Activated B cell treated with CpG ODN at 0.5 μM for 24 hours (primary cell): ENCODE measurements at regions of chr16 and their contacts with region 1.

Region 1: DNA sequence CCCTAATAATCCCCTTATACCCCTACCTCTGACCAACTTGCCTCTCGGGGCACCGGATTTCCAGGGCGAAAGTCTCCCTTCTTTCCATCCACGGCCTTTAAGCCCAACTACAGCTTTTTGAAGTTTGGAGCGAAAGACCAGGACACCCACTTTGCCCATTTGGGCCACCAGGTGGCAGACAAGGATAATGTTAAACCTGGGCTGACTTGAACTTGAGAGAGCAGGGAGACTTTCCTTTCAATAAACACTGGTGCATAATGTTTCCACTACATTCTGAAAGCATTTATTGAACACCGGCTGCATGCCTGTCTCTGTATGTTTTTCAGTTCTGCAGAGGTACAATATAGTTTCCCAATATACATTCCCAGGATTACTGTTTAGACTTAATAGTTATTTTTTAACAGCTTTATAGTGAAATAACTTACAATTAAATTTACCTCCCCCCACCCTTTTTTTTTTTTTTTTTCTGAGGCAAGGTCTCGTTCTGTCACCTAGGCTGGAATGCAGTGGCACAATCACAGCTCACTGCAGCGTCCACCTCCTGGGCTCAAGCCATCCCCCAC is 6.9 kb upstream of the CES3 start:
- DNase-seq: peak; percentile 51
- ATAC-seq: peak; percentile 78
- H3K4me3 Mint-ChIP-seq: no peak overlapping the region
- H3K27ac Mint-ChIP-seq: no peak overlapping the region
- H3K4me1 Mint-ChIP-seq: no peaks in the 10 kb centered on the region
- H3K27me3 Mint-ChIP-seq: peaks cover 23% of the 10 kb centered on the region
- CTCF ChIP-seq: no peak

Region 2: DNA sequence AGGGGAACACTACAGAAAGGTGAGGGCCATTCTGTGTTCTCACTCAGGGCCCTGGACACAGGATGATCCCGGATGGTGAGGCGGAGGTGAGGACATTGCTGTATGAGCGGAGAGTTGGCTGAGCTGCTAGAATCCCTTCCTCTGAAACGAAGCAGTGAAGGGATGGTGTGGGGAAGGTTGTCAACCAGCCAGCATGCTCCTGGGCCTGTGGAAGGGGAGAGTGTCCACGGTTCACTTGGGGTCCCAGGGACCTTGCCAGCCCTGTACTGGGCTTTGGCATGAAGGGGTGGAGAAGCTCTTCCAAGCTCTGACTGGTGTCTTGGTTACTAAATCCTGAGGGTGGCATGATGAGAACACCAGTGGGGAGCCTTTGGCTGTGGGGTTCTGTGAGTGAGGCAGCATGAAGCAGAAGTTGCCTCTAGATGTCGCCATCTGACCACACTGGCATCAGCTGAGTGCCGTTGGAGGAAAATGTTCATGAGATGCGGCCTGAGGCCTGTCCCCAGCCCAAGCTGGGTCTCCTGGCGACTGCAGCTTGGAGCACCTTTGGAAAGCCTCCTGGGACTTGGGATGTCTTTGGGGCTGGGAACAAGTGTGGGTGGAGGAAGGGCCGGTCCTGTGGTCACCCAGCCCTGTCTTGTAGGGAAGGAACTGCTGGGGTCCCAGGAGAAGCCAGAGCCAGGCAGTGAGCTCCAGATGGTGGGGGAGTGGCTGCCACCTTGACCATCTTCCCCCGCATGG is 59.1 kb before region 1 on chr16:
- CTCF ChIA-PET with region 1: interaction called, 3 read pairs
- POLR2A ChIA-PET with region 1: no interaction called
- intact Hi-C with region 1: loop called (anchors 2 kb)
- DNase-seq: peak; percentile 21
- ATAC-seq: peak; percentile 75
- H3K4me3 Mint-ChIP-seq: no peak overlapping the region
- H3K27ac Mint-ChIP-seq: no peak overlapping the region
- H3K4me1 Mint-ChIP-seq: peaks cover 2% of the 10 kb centered on the region
- H3K27me3 Mint-ChIP-seq: no peaks in the 10 kb centered on the region
- CTCF ChIP-seq: no peak

Region 3: DNA sequence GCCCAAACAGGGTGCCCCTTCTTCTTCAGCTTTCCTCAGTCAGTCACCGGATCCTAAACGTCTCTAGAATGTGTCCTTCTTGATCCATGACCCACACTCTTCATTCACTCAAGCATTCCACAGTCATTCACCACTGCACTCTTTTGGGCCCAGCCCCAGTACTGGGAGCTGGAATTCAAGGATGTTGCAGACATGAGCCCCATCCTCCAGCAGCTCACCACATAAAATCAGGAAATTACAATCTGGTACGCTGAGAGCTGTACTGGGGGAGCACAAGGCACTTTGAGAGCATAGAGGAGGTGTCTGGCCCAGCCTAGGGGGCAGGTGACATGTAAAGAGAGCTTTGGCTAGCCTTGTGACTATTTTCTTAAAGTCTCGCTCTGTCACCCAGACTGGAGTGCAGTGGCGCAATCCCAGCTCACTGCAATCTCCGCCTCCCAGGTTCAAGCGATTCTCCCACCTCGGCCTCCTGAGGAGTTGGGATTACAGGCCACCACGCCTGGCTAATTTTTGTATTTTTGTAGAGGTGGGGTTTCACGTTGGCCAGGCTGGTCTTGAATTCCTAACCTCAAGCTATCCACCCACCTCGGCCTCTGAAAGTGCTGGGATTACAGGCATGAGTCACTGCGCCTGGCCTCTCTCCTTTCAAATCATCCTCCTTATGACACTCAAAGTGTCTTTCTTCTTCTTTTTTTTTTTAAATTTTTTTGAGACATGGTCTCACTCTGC is 52.9 kb after region 1 on chr16:
- CTCF ChIA-PET with region 1: no interaction called
- POLR2A ChIA-PET with region 1: no interaction called
- intact Hi-C with region 1: no loop called
- DNase-seq: no peak
- ATAC-seq: no peak
- H3K4me3 Mint-ChIP-seq: no peak overlapping the region
- H3K27ac Mint-ChIP-seq: no peak overlapping the region
- H3K4me1 Mint-ChIP-seq: no peaks in the 10 kb centered on the region
- H3K27me3 Mint-ChIP-seq: no peaks in the 10 kb centered on the region
- CTCF ChIP-seq: no peak

Region 4: GRCh38 chr16:67183627-67184328 is 229.6 kb after region 1 on chr16 and contains the start of gene MATCAP1:
- CTCF ChIA-PET with region 1: interaction called, 4 read pairs
- POLR2A ChIA-PET with region 1: no interaction called
- intact Hi-C with region 1: loop called (anchors 1 kb)
- DNase-seq: peak; percentile 94
- ATAC-seq: peak; percentile 96
- H3K4me3 Mint-ChIP-seq: peak within 1 kb of the TSS; percentile 85
- H3K27ac Mint-ChIP-seq: no peak within 1 kb of the TSS
- H3K4me1 Mint-ChIP-seq: peaks cover 14% of the 10 kb centered on the region
- H3K27me3 Mint-ChIP-seq: peaks cover 12% of the 10 kb centered on the region
- CTCF ChIP-seq: no peak
- total RNA-seq, gene MATCAP1: 10.6 and 18.7 TPM in 2 replicates

Region 5: GRCh38 chr16:67464565-67464964 is 510.4 kb after region 1 on chr16:
- CTCF ChIA-PET with region 1: no interaction called
- POLR2A ChIA-PET with region 1: no interaction called
- intact Hi-C with region 1: loop called (anchors 2 kb)
- DNase-seq: no peak
- ATAC-seq: no peak
- H3K4me3 Mint-ChIP-seq: no peak overlapping the region
- H3K27ac Mint-ChIP-seq: no peak overlapping the region
- H3K4me1 Mint-ChIP-seq: peaks cover 39% of the 10 kb centered on the region
- H3K27me3 Mint-ChIP-seq: no peaks in the 10 kb centered on the region
- CTCF ChIP-seq: no peak